ENCODE measurements at regions of chr17 and their contacts with region 1.

Region 1: DNA sequence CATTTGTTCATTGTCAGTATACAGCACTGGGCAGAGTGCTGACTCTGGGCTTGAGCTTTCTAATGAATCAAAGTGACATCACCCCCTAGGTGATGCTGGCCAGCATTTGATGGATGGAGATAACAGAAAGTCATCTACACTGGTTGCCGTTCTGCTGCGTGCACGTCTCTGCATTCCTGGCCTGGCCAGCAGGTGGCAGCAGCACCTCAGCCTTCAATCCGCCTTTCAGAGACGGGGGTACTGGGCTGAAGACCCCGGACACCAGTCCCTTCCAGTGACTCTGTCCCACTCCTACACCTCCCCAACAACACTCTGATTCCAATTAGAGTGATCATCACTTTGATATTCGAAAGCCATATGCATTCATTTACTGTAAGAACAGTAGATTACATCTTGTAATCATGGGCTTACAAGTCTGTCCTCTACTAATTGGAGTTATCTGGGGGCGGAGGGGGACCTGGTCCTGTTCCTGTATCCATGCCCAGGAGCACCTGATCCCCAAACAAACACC is 6.0 kb downstream of the CPSF4L start:
- DNase-seq: no peak
- H3K4me3 ChIP-seq: no peak overlapping the region
- CTCF ChIP-seq: peak; percentile 93

Region 2: GRCh38 chr17:73231841-73232586 is 23.7 kb before region 1 on chr17:
- CTCF ChIA-PET with region 1: interaction called, 55 read pairs
- POLR2A ChIA-PET with region 1: interaction called, 3 read pairs
- DNase-seq: peak; percentile 51
- H3K4me3 ChIP-seq: peak overlapping the region; percentile 93
- CTCF ChIP-seq: no peak

Region 3: DNA sequence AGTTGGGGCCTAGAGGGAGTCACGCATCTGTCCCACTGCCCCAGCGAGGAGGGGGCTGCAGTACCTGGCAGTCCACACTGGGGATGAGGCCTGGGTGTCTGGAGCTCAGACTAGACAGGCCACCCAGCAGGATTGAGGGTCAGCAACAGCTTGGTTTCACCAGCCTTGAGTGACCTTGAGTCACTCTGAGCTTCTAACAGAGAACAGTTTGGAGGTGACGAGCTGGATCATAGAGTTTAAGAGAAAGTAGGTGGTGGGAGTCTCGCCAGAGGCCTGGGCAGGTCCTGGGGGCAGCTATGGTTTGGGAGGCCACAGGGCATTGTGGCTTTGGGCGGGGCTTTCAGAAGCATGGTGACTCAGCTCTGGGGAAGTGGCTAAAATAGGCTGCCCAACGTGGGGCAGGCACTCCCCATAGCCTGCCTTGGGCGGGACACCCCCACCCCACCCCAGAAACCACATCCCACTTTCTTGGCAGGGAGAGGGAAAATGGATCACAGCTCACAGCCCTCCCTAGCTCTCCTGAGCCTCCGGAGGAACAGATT is 35.6 kb after region 1 on chr17:
- CTCF ChIA-PET with region 1: interaction called, 13 read pairs
- POLR2A ChIA-PET with region 1: no interaction called
- DNase-seq: no peak
- H3K4me3 ChIP-seq: no peak overlapping the region
- CTCF ChIP-seq: no peak

Region 4: DNA sequence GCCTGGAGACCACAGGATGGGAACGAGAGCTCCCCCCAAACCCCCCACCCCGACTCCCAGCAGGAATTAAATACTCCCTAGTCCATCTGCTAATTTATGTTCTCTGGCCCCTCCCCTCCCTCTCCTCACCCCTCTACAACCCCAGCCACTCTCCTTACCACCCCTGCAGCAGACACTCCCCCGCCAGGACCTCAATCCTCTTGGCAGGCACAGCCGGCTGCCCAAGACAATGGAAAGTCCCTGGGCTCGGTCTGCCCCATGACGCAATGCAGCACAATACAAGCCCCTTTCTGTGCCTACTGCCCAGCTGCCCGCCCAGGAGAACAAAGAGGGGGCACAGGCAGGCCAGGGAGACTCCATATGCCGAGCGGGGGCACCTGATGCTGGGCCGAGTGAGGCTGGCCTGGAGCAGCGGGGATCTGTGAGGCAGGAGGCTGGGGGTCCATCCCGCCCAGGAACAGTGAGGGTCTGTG is 86.4 kb after region 1 on chr17:
- CTCF ChIA-PET with region 1: interaction called, 12 read pairs
- POLR2A ChIA-PET with region 1: no interaction called
- DNase-seq: peak; percentile 58
- H3K4me3 ChIP-seq: no peak overlapping the region
- CTCF ChIP-seq: no peak

Region 5: DNA sequence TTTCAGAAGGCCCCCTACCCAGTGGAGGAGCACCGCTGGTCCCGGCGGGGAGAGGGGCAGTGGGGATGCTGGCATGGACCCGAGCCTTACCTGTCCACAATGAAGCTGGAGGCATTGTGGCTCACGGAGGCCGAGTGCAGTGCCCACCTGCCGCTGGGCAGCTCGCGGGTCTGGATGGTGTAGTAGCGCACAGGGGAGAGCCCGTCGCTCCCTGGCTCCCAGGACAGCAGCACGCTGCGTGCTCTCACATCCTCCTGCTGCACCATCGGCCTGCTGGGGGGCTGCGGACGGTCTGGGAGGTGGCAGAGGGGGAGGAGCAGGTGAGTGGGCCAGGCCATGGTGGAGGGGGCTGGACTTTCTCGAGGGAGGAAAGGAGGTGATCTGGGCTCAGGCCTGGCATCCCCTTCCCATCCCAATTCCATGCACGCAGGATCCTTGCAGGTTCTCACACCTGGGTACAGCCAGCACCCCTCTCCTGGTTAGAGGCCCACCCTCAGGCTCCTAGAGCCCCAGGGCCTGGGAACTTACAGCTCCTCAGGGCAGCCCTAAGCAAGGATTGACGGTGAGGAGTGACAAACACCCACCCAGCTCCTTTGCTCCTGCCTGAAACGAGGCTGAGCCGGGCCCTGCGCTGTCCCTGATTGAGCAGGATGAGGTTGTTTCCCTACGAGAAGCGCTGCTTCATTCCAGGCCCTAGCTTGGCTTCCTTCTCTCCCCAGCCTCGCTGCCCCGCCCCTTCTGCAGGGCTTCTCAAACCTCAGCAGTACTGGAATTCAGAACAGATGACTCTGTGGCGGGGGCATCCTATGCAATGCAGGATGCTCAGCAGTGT is 132.2 kb after region 1 on chr17:
- CTCF ChIA-PET with region 1: interaction called, 12 read pairs
- POLR2A ChIA-PET with region 1: no interaction called
- DNase-seq: no peak
- H3K4me3 ChIP-seq: no peak overlapping the region
- CTCF ChIP-seq: no peak

Region 6: GRCh38 chr17:73855720-73856333 is 600.1 kb after region 1 on chr17:
- CTCF ChIA-PET with region 1: no interaction called
- POLR2A ChIA-PET with region 1: no interaction called
- DNase-seq: no peak
- H3K4me3 ChIP-seq: no peak overlapping the region
- CTCF ChIP-seq: no peak

Measured in AG04449 (cell line).